Body of pancreas (tissue), 4 donors: ENCODE measurements at regions of chr21 and their contacts with region 1.

Region 1: DNA sequence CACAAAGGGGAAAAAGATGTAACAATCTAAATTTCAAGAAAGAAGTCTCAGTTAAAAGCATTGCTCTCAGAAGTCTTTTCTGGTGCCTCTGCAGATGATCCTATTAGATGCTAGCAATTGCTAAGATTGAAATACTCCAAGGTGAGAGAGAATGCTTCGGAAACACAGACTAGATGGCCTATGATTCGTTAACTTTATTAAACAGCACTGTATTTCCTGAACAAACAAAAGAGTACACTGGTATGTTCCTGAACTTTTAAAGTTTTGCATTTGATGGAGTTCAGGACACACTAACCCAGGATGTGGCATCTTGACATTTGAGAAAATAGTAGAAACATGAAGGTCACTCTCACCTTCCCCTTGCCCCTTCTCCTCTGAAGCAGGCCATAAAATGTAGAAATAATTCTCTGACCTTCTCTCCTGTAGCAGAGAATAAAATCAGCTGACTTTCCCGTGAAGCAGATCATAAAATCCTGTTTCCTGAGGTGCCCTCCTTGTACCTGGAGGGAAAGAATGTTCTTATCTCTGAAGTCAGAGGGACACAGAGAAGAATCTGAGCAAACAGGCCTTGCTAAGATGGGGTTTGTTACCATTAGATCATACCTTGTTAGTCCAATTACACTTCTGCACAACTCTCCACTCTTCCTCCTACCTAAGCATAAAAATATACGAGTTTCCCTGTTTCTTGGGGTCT is 142.9 kb upstream of the USP25 start:
- DNase-seq: no peak
- ATAC-seq: no peak
- H3K4me3 ChIP-seq: no peak overlapping the region
- H3K27ac ChIP-seq: no peak overlapping the region
- H3K4me1 ChIP-seq: no peaks in the 10 kb centered on the region
- H3K27me3 ChIP-seq: no peaks in the 10 kb centered on the region
- CTCF ChIP-seq: no peak
- POLR2A ChIP-seq: no peak

Region 2: DNA sequence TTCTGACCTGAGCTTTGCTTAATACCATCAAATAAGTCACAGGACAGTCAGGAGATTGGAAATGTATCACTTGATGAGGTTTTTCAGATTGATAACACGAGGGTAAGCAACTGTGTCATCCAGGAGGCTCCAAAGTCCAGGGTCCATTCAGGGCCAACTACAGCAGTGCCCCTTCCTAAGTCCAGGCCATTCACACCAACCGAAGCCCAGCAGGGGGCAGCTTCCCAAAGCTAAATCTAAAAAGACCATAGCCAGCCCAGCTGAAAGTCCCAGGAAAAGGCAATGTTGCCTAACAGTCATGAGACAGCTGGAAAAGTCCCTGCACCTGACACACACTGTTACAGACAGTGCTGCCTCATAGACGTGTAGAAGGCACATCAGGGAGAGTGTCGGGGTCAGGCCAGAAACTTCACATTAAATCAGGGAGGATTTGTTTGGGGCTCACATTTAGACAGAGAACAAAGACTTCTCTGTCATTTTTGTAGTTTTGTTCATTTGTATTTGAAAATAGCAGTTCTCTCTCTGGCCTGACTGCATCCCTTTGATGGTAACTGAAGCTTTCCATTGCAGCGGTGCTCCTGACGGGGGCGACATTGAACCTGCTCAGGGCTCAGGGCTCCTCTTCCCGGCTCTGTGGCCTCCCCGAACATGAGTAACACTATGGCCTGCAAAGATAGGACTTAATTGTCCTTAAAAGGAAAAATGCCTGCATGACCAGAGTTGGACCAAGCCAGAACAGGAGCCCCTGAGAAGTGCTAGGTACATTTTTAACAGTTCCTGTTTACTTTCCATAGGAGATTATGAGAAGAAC is 722.5 kb before region 1 on chr21:
- intact Hi-C with region 1: loop called (anchors 10 kb)
- DNase-seq: peak; percentile 72 to 81 (median 77)
- ATAC-seq: peak; percentile 90
- H3K4me3 ChIP-seq: no peak overlapping the region
- H3K27ac ChIP-seq: peak overlapping the region in 2 of 4 donors; percentile 9 to 47
- H3K4me1 ChIP-seq: peaks cover 8% of the 10 kb centered on the region
- H3K27me3 ChIP-seq: no peaks in the 10 kb centered on the region
- CTCF ChIP-seq: peak; percentile 21 to 68 (median 57)
- POLR2A ChIP-seq: no peak

Region 3: DNA sequence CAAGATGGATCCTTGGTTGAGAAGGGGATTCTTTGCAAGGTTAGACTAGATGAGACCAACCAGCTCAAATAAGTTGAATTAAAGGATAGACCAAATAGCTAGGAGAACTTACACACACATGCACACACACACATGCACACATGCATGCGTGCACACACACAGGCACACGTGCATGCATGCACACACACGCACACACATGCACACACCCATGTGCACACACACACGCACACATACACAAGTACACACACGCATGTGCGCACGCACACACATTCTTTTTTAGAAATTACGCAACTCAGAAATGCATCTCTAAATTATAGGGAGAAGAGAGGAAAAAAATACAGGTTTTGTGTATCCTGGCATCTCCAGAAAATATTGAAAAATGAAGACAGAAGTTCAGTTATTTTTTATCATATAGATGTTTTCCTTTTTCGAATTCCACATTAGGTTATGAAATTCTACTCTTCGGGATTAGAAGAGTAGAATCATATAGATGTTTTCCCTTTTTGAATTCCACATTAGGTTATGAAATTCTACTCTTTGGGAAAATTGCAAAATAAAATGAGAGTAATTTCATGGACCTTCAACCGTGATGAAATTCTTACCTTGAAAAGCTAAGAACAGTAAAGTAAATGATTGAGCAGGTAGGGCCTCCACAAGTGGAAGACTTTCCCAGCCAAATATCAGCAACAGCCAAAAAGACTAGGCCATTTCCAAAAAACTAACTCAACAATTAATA is 100.3 kb before region 1 on chr21:
- intact Hi-C with region 1: no loop called
- DNase-seq: no peak
- ATAC-seq: no peak
- H3K4me3 ChIP-seq: no peak overlapping the region
- H3K27ac ChIP-seq: no peak overlapping the region
- H3K4me1 ChIP-seq: no peaks in the 10 kb centered on the region
- H3K27me3 ChIP-seq: no peaks in the 10 kb centered on the region
- CTCF ChIP-seq: no peak
- POLR2A ChIP-seq: no peak

Region 4: GRCh38 chr21:15552914-15553494 is 33.9 kb before region 1 on chr21:
- intact Hi-C with region 1: no loop called
- DNase-seq: no peak
- ATAC-seq: no peak
- H3K4me3 ChIP-seq: no peak overlapping the region
- H3K27ac ChIP-seq: no peak overlapping the region
- H3K4me1 ChIP-seq: no peaks in the 10 kb centered on the region
- H3K27me3 ChIP-seq: no peaks in the 10 kb centered on the region
- CTCF ChIP-seq: peak in 4 of 7 experiments; percentile 10 to 24 (median 16)
- POLR2A ChIP-seq: no peak

Region 5: DNA sequence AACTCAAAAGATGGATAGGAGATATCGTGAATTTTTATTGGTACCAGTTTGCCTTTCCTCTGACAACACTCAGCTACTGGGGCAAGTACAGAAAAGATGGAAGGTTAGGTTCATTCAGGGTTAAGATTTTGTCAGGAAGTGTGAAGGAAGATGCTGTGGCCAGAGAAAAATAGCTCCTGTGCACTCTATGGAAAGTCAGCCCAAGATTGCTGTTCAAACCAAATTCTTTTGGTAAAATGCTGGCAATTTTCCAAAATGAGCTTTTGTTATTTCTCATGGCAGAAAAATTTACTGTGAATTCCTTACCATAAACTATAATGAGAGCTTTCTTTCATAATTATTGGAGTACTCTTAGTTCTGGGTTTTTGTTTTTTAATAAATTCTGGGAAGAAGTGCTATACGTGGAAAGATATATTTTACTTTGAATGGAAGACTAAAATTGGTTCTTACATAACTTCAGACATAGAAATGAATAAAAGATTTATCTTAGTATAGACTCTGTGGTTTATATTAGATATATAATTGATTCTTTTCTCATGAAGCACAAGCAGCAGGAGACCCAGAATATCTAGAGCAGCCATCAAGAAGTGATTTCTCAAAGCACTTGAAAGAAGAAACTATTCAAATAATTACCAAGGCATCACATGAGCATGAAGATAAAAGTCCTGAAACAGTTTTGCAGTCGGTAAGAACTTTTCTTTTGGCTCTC is 255.1 kb after region 1 on chr21:
- intact Hi-C with region 1: no loop called
- DNase-seq: no peak
- ATAC-seq: no peak
- H3K4me3 ChIP-seq: no peak overlapping the region
- H3K27ac ChIP-seq: no peak overlapping the region
- H3K4me1 ChIP-seq: no peaks in the 10 kb centered on the region
- H3K27me3 ChIP-seq: no peaks in the 10 kb centered on the region
- CTCF ChIP-seq: no peak
- POLR2A ChIP-seq: no peak